MCF 10A (cell line): ENCODE measurements at regions of chr5 and their contacts with region 1.

Region 1: GRCh38 chr5:163867738-163868381 is 362.4 kb downstream of the MAT2B start:
- DNase-seq: no peak
- H3K4me3 Mint-ChIP-seq: no peak overlapping the region
- H3K27ac Mint-ChIP-seq: no peak overlapping the region
- H3K4me1 Mint-ChIP-seq: no peaks in the 10 kb centered on the region
- H3K27me3 Mint-ChIP-seq: no peaks in the 10 kb centered on the region
- CTCF ChIP-seq: no peak

Region 2: GRCh38 chr5:163747586-163747985 is 120.3 kb before region 1 on chr5:
- CTCF ChIA-PET with region 1: no interaction called
- POLR2A ChIA-PET with region 1: no interaction called
- intact Hi-C with region 1: no loop called
- DNase-seq: no peak
- H3K4me3 Mint-ChIP-seq: no peak overlapping the region
- H3K27ac Mint-ChIP-seq: no peak overlapping the region
- H3K4me1 Mint-ChIP-seq: no peaks in the 10 kb centered on the region
- H3K27me3 Mint-ChIP-seq: no peaks in the 10 kb centered on the region
- CTCF ChIP-seq: no peak

Region 3: DNA sequence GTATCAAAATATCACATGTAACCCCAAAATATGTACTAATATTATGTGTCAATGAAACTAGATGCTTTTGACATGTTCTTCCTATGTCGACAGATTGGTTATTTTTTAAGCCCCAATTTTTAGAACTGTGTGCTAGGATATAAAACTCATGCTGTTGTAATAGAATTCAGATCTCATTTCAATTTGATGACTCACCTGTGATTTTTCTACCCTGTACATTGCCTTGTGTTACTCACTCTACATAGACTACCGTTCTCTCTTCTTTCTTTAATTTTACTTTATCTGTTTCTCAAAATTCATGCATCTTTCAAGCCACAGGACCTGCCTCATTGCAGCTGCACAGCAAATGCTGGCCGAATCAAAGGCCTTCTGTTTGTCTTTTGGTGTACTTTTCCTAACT is 78.0 kb before region 1 on chr5:
- CTCF ChIA-PET with region 1: no interaction called
- POLR2A ChIA-PET with region 1: no interaction called
- intact Hi-C with region 1: no loop called
- DNase-seq: peak; percentile 72
- H3K4me3 Mint-ChIP-seq: no peak overlapping the region
- H3K27ac Mint-ChIP-seq: no peak overlapping the region
- H3K4me1 Mint-ChIP-seq: peaks cover 22% of the 10 kb centered on the region
- H3K27me3 Mint-ChIP-seq: no peaks in the 10 kb centered on the region
- CTCF ChIP-seq: no peak

Region 4: GRCh38 chr5:163893281-163893680 is 25.4 kb after region 1 on chr5:
- CTCF ChIA-PET with region 1: no interaction called
- POLR2A ChIA-PET with region 1: no interaction called
- intact Hi-C with region 1: loop called (anchors 1 kb)
- DNase-seq: peak; percentile 79
- H3K4me3 Mint-ChIP-seq: no peak overlapping the region
- H3K27ac Mint-ChIP-seq: peak overlapping the region; percentile 53
- H3K4me1 Mint-ChIP-seq: peaks cover 31% of the 10 kb centered on the region
- H3K27me3 Mint-ChIP-seq: no peaks in the 10 kb centered on the region
- CTCF ChIP-seq: no peak